ENCODE measurements at regions of chr11 and their contacts with region 1.

Region 1: DNA sequence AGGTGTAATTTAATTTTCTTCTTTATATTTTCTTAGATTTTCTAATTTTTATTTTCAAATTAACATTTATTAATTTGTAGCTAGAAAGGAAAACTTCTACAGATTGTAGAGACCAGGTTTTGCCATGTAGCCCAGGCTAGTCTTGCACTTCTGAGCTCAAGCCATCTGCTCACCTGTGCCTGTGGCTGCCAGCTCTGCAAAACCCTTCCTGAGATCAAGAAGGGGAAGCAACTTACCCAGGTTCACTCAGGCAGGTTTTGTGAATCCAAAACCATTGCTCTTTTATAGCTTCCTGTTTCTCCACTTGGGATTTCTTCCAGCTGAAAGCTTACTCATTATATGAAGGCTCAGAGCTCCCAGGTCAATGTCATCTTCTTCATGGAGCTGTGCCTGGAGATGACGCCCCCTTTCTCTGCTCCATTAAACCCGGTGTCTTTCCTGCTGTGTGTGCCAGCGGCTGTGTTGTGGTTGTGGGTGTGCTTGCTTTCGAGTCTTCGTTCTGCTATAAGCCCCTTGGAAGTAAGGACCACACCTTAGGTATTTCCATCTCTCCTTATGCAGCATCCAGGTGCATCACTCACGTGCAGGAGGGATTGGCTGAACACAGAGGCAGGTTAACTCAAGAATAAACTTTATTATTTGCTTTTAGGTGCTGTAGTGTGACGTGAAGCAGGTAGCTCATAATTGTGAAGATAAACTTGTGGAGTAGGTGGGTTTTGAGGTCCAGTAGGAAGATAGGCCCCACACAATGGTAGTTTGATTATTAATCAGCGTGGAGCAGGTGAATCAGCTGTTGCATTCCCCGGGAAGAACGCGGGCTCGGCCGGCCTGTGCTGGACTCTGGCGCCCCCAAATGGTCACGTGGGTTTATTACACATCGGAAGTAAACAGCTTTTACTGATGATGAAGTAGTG is 42.2 kb upstream of the INCENP start:
- DNase-seq: peak; percentile 25 to 95
- H3K4me3 ChIP-seq: no peak overlapping the region
- H3K27ac ChIP-seq: no peak overlapping the region
- H3K4me1 ChIP-seq: no peaks in the 10 kb centered on the region
- H3K27me3 ChIP-seq: no peaks in the 10 kb centered on the region
- CTCF ChIP-seq: peak; percentile 84 to 94 (median 89)
- EP300 ChIP-seq: no peak
- POLR2A ChIP-seq: no peak
- RAD21 ChIP-seq: peak; percentile 98 to 99

Region 2: GRCh38 chr11:61885166-61885778 is 196.4 kb before region 1 on chr11:
- CTCF ChIA-PET with region 1: interaction called, 24 read pairs
- POLR2A ChIA-PET with region 1: no interaction called
- DNase-seq: peak in 1 of 2 experiments; percentile 45
- H3K4me3 ChIP-seq: no peak overlapping the region
- H3K27ac ChIP-seq: no peak overlapping the region
- H3K4me1 ChIP-seq: peaks cover 0 to 15% (median 6%) of the 10 kb centered on the region in 4 experiments; a peak in 5 of 7 replicates
- H3K27me3 ChIP-seq: no peaks in the 10 kb centered on the region
- CTCF ChIP-seq: no peak
- EP300 ChIP-seq: no peak
- POLR2A ChIP-seq: no peak
- RAD21 ChIP-seq: 0 out of 4 replicates have a peak, but pooled peaks of 1 of the 2 experiments have one; percentile 2

Region 3: DNA sequence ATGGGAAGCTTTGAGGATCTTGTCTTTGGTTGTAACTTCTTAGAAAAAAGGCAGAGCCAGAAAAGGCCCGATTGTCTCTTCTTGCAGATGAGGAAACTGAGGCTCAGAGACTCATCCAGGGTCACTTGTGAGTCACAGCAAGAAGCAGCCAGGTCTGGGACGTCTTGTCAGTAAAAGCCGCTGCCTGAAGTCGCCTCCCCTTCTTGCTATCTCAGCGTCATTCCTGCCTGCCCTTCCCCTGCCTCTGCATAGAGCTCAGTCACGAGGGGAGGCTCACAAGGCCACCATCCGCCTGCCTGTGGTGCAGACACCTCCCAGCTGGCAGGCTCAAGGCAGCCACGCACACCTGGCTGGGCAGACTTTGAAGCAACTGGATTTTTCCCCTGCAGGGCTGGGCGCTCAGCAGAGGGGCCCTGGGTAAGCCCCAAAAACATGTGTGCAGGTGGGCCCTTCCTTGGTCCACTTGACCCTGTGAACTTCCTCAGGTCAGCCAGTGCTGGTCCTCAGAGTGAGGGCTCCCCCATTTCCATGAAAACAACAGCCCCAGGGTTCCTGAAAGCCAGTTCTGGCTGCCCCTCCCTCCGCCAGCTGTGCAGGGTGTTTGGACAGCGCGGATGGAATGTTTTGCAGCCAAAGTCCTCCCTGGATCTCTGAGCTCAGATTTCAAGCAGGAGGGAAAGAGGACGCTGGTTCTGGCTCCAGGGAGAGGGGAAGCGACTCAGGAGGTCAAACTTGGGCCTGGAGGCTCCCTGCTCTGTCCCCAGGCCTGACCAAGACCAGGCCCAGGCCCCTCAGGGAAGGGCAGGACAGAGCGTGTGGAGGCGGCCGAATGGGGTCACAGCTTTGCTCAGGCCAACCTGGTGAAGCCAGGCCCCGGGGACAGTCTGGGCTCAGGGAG is 158.2 kb before region 1 on chr11:
- CTCF ChIA-PET with region 1: interaction called, 12 read pairs
- POLR2A ChIA-PET with region 1: no interaction called
- DNase-seq: peak in 1 of 2 experiments; percentile 62
- H3K4me3 ChIP-seq: no peak overlapping the region
- H3K27ac ChIP-seq: peak overlapping the region; percentile 52; the same call in 1 of the 2 replicates
- H3K4me1 ChIP-seq: peaks cover 6 to 18% (median 16%) of the 10 kb centered on the region in 4 experiments
- H3K27me3 ChIP-seq: peaks cover 0 to 9% (median 5%) of the 10 kb centered on the region in 4 experiments; a peak in 5 of 7 replicates
- CTCF ChIP-seq: no peak
- EP300 ChIP-seq: no peak
- POLR2A ChIP-seq: 0 out of 3 replicates have a peak, but pooled peaks of 1 of the 2 experiments have one; percentile 22
- RAD21 ChIP-seq: no peak

Region 4: DNA sequence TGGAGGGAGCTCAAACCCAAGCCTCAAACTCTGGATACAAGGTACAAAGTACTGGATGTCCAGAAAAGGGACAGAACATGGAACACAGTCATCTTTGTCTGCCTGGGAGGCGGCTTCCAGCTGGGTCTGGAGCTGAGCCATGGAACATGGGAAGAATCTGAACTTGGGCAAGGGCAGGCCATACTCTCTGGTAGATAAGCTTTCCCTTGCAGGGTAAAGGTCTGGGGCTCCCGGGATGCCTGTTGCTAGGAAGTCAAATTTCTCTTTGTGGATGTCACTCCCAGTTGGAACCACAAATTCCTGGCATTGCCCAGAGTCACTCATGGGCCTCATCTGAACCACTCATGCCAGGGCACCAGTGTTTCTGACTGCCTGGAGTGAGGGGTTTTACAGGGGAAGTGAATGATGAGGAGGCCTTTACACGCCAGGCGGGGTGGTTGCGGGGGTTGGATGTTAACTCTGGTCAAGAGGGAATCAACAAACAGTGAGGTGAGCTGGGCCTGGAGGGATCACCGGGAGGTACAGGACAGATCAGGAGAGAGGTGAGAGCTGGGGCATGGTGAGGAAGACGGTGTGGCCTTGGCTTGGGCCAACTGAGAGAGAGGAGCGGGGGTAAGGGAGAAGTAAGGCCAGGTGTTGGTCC is 119.9 kb before region 1 on chr11:
- CTCF ChIA-PET with region 1: interaction called, 31 read pairs
- POLR2A ChIA-PET with region 1: interaction called, 25 read pairs
- DNase-seq: no peak
- H3K4me3 ChIP-seq: no peak overlapping the region
- H3K27ac ChIP-seq: no peak overlapping the region
- H3K4me1 ChIP-seq: no peaks in the 10 kb centered on the region
- H3K27me3 ChIP-seq: peaks cover 0 to 1% (median 0%) of the 10 kb centered on the region in 4 experiments; a peak in 2 of 7 replicates
- CTCF ChIP-seq: no peak
- EP300 ChIP-seq: no peak
- POLR2A ChIP-seq: no peak
- RAD21 ChIP-seq: no peak

Region 5: DNA sequence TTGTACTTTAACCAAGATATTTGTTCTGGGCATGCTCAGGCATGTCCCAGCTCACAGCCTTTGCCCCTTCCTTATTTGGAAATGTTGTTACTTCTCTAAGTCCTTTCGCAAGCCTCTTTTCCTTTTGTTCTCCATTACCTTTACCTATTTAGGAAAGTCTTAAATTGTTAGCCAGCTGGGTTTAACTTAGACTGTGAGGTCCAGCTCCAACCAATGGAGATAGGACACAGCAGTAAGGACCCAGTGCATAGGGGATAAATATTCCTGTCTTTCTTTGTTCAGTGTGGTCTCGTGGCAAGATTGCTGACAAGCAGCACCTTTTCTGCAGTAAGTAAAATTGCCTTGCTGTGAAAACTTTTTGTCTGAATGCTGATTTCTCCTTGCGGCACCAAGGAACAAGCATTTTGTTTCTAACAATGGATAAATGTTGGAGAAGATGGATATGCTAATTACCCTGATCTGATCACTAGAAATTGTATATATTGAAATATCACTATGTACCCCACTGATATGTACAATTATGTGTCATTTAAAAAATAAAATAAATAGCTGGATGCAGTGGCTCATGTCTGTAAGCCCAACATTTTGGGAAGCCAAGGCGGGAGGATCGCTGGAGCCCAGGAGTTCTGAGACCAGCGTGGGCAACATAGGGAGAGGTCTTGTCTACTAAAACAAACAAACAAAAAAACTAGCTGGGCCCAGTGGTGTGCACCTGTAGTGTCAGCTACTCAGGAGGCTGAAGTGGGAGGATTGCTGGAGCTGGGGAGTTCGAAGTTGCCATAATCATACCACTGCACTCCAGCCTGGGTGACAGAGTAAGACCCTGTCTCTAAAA is 82.3 kb before region 1 on chr11:
- CTCF ChIA-PET with region 1: interaction called, 13 read pairs
- POLR2A ChIA-PET with region 1: no interaction called
- DNase-seq: no peak
- H3K4me3 ChIP-seq: peak overlapping the region in 1 of 4 experiments; percentile 22; a peak in 2 of 8 replicates
- H3K27ac ChIP-seq: peak overlapping the region; percentile 92
- H3K4me1 ChIP-seq: peaks cover 0 to 19% (median 6%) of the 10 kb centered on the region in 4 experiments; a peak in 6 of 7 replicates
- H3K27me3 ChIP-seq: no peaks in the 10 kb centered on the region
- CTCF ChIP-seq: no peak
- EP300 ChIP-seq: no peak
- POLR2A ChIP-seq: no peak; a peak in 2 of 3 replicates
- RAD21 ChIP-seq: no peak

Region 6: DNA sequence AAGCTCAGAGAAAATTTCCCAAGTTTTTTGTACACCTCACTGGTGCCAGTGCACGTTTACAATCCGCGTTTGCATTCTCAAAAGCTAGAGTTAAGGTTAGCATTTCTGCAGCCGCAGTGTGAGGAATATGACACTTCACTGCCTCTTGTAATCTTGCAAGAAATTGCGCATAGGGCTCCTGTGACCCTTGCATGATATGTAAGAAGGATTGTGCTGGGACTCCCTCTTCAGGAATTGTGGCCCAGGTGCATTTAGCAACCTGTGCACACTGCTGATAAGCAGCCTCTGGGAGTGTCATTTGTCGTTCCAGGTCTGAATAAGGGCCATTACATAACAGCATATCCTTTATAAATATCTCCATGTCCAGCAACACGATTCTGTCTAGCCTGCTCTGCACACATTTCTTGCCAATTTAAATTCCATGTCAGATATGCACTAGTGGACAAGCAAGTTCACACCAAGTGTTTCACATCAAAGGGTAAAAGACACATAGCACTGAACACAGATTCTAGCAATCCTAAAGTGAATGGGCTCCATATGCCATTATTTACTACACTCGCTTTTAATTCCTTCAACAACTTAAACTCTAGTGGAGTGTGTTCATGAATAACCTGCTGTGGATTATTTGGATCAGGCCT is 27.0 kb before region 1 on chr11:
- CTCF ChIA-PET with region 1: interaction called, 14 read pairs
- POLR2A ChIA-PET with region 1: interaction called, 3 read pairs
- DNase-seq: no peak
- H3K4me3 ChIP-seq: no peak overlapping the region
- H3K27ac ChIP-seq: no peak overlapping the region
- H3K4me1 ChIP-seq: no peaks in the 10 kb centered on the region
- H3K27me3 ChIP-seq: no peaks in the 10 kb centered on the region
- CTCF ChIP-seq: peak; percentile 29 to 59 (median 57)
- EP300 ChIP-seq: no peak
- POLR2A ChIP-seq: no peak
- RAD21 ChIP-seq: peak; percentile 65 to 78

Region 7: GRCh38 chr11:62108017-62108750 is 26.5 kb after region 1 on chr11:
- CTCF ChIA-PET with region 1: interaction called, 48 read pairs
- POLR2A ChIA-PET with region 1: no interaction called
- DNase-seq: peak in 1 of 2 experiments; percentile 19
- H3K4me3 ChIP-seq: no peak overlapping the region
- H3K27ac ChIP-seq: no peak overlapping the region
- H3K4me1 ChIP-seq: no peaks in the 10 kb centered on the region; a peak in 1 of 7 replicates
- H3K27me3 ChIP-seq: no peaks in the 10 kb centered on the region
- CTCF ChIP-seq: peak in 2 of 3 experiments; percentile 77 to 83; a peak in 3 of 4 replicates
- EP300 ChIP-seq: no peak
- POLR2A ChIP-seq: no peak
- RAD21 ChIP-seq: peak; percentile 93 to 94

Region 8: GRCh38 chr11:62133328-62134093 is 51.9 kb after region 1 on chr11:
- CTCF ChIA-PET with region 1: no interaction called
- POLR2A ChIA-PET with region 1: no interaction called
- DNase-seq: no peak
- H3K4me3 ChIP-seq: no peak overlapping the region
- H3K27ac ChIP-seq: no peak overlapping the region
- H3K4me1 ChIP-seq: no peaks in the 10 kb centered on the region
- H3K27me3 ChIP-seq: no peaks in the 10 kb centered on the region
- CTCF ChIP-seq: no peak
- EP300 ChIP-seq: no peak
- POLR2A ChIP-seq: no peak
- RAD21 ChIP-seq: no peak

Region 9: GRCh38 chr11:62190011-62190410 is 108.4 kb after region 1 on chr11 and contains the start of gene SCGB1D1:
- CTCF ChIA-PET with region 1: no interaction called
- POLR2A ChIA-PET with region 1: no interaction called
- DNase-seq: no peak
- H3K4me3 ChIP-seq: no peak within 1 kb of the TSS
- H3K27ac ChIP-seq: no peak within 1 kb of the TSS
- H3K4me1 ChIP-seq: no peaks in the 10 kb centered on the region
- H3K27me3 ChIP-seq: no peaks in the 10 kb centered on the region
- CTCF ChIP-seq: no peak
- EP300 ChIP-seq: no peak
- POLR2A ChIP-seq: no peak
- RAD21 ChIP-seq: no peak
- total RNA-seq, gene SCGB1D1: not detected in 2 replicates

Measured in H1 (cell line).